Gastrocnemius medialis (tissue), 4 donors: ENCODE measurements at regions of chr2 and their contacts with region 1.

Region 1: DNA sequence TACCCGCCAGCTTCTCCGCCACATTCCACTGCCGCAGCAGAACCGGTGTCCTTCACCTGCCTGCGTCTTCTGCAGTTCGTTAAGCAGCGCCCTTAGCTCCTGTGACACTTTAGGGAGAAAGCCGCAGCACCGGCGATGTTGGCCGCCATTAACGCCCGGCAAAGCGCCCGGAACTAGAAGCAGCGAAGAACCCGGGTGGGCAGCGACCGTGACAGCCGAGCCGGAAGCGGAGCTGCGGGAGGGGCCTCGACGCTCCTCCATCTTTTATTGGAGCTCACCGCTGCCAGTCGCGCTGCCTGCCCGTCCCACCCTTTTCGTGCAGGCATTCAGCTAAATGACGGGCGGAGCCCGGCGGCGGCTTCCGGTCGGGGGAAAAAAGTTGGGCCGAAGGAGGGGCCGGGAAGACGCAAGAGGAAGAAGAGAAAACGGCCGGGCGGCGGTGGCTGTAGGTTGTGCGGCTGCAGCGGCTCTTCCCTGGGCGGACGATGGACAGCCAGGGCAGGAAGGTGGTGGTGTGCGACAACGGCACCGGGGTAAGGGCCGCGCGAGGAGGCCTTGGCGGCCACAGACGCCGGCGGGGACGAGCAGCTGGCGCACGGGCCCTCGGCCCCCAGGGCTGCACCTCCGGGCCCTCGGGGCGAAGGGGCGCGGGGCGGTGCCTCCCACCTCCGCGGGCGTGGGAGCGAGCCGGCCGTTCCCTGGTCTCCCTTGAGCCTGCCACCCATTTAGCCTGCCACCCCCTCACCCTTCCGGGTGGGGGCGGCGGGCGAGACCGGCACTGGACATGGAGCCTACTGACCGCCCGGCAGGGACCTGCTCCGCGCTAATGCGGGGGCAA is at the start of gene ACTR2:
- DNase-seq: peak; percentile 94 to 96
- ATAC-seq: peak; percentile 92 to 94
- H3K4me3 ChIP-seq: peak within 1 kb of the TSS; percentile 87 to 95 (median 92)
- H3K27ac ChIP-seq: peak within 1 kb of the TSS; percentile 92 to 99 (median 98)
- H3K4me1 ChIP-seq: peaks cover 24 to 26% of the 10 kb centered on the region in 2 donors
- H3K27me3 ChIP-seq: no peaks in the 10 kb centered on the region
- CTCF ChIP-seq: no peak
- POLR2A ChIP-seq: peak; percentile 87 to 90
- total RNA-seq, gene ACTR2: 34.4 to 43.9 (median 35.8) TPM

Region 2: GRCh38 chr2:65070172-65070830 is 157.3 kb before region 1 on chr2:
- in situ Hi-C with region 1: no loop called
- intact Hi-C with region 1: loop called (anchors 5 kb)
- DNase-seq: peak; percentile 52 to 69
- ATAC-seq: peak; percentile 63 to 71
- H3K4me3 ChIP-seq: no peak overlapping the region
- H3K27ac ChIP-seq: peak overlapping the region; percentile 78 to 90 (median 87)
- H3K4me1 ChIP-seq: peaks cover 81 to 83% of the 10 kb centered on the region in 2 donors
- H3K27me3 ChIP-seq: no peaks in the 10 kb centered on the region
- CTCF ChIP-seq: peak in 3 of 5 experiments; percentile 21 to 52 (median 42)
- POLR2A ChIP-seq: peak in 1 of 2 donors; percentile 40

Region 3: GRCh38 chr2:65329525-65329924 is 101.9 kb after region 1 on chr2:
- in situ Hi-C with region 1: no loop called
- intact Hi-C with region 1: no loop called
- DNase-seq: no peak
- ATAC-seq: no peak
- H3K4me3 ChIP-seq: no peak overlapping the region
- H3K27ac ChIP-seq: no peak overlapping the region
- H3K4me1 ChIP-seq: no peaks in the 10 kb centered on the region
- H3K27me3 ChIP-seq: no peaks in the 10 kb centered on the region
- CTCF ChIP-seq: no peak
- POLR2A ChIP-seq: no peak

Region 4: GRCh38 chr2:65514555-65515195 is 287.0 kb after region 1 on chr2:
- in situ Hi-C with region 1: no loop called
- intact Hi-C with region 1: no loop called
- DNase-seq: no peak
- ATAC-seq: no peak
- H3K4me3 ChIP-seq: no peak overlapping the region
- H3K27ac ChIP-seq: no peak overlapping the region
- H3K4me1 ChIP-seq: no peaks in the 10 kb centered on the region
- H3K27me3 ChIP-seq: no peaks in the 10 kb centered on the region
- CTCF ChIP-seq: no peak
- POLR2A ChIP-seq: no peak

Region 5: GRCh38 chr2:65789923-65790675 is 562.5 kb after region 1 on chr2:
- in situ Hi-C with region 1: no loop called
- intact Hi-C with region 1: no loop called
- DNase-seq: no peak
- ATAC-seq: no peak
- H3K4me3 ChIP-seq: no peak overlapping the region
- H3K27ac ChIP-seq: no peak overlapping the region
- H3K4me1 ChIP-seq: no peaks in the 10 kb centered on the region
- H3K27me3 ChIP-seq: no peaks in the 10 kb centered on the region
- CTCF ChIP-seq: no peak
- POLR2A ChIP-seq: no peak